ENCODE measurements at regions of chr2 and their contacts with region 1.

Region 1: DNA sequence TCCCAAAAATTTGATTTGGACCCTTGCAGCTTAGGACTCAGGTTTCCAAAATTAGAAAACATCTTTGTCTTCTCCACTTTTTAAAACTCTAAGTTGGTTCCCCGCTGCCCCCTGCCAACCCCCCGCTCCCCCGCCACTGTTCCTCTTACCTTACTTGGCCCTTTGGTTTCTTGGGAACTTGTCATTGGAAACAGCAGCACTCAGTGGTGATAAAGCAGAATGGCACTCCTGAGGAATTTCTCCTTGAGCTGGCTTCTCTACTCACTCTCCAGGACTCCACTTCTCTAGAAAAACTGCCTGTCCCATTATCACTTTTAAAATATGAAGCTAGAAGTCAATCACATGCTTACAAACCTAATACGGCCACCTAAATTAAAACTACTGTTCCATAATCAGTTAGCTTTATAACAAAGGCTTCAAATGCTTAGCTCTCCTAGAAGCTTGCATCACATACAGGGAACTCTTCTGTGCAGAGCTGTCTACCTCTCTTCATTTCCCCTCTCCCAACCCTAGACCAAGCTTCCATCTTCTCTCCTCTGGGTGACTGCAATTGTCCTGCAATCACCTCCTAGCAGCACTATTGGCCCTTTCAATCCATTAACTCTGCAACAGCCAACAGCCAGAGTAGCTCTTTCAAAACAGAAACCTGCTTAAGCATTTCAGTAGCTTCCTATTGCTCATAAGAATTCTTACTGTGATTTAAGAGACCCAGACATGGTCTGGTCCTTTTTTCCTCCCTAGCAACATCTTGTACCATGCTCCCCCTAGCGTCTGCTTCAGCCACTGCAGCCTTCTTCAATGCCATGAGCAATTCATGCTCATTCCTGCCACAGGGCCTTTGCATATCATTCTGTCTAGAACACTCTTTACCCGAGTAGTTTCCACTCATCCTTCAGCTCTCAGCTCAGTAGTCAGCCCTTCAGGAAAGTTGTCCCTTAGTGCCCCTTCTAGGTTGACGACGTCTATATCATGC is 15.2 kb upstream of the PLEKHM3 start:
- DNase-seq: peak; percentile 66
- ATAC-seq: peak; percentile 73

Region 2: DNA sequence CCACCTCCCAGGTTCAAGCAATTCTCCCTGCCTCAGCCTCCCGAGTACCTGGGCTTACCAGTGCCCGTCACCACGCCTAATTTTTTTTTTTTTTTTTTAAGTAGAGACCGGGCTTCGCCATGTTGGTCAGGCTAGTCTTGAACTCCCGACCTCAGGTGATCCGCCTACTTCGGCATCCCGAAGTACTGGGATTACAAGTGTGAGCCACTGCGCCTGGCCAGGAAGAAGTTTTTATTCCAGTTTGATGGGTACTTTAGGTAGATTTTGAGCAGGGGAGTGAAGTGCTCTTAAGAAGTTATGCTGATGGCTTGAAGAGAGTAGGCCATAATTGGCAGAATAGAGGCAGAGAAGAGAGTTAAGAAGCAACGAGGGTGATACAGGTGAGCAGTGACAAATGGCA is 296.0 kb before region 1 on chr2:
- intact Hi-C with region 1: loop called (anchors 2 kb)
- DNase-seq: no peak
- ATAC-seq: no peak

Region 3: GRCh38 chr2:208134928-208135586 is 94.6 kb after region 1 on chr2:
- intact Hi-C with region 1: no loop called
- DNase-seq: no peak
- ATAC-seq: no peak

Measured in left ventricle myocardium superior (tissue), 1 donor.